Aorta (tissue), 5 donors: ENCODE measurements at regions of chr2 and their contacts with region 1.

Region 1: DNA sequence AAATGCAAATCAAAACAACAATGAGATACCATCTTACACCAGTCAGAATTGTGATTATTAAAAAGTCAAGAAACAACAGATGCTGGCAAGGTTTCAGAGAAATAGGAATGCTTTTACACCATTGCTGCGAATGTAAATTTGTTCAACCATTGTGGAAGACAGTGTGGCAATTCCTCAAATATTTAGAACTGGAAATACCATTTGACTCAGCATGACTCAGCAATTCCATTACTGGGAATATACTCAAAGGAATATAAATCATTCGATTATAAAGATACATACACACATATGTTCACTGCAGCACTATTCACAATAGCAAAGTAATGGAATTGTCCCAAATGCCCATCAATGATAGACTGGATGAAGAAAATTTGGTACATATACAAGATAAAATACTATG is 516.7 kb downstream of the ERBB4 start:
- DNase-seq: no peak
- ATAC-seq: no peak
- H3K4me3 ChIP-seq: no peak overlapping the region
- H3K27ac ChIP-seq: no peak overlapping the region
- H3K4me1 ChIP-seq: peaks cover 0 to 2% of the 10 kb centered on the region in 2 donors
- H3K27me3 ChIP-seq: no peaks in the 10 kb centered on the region

Region 2: DNA sequence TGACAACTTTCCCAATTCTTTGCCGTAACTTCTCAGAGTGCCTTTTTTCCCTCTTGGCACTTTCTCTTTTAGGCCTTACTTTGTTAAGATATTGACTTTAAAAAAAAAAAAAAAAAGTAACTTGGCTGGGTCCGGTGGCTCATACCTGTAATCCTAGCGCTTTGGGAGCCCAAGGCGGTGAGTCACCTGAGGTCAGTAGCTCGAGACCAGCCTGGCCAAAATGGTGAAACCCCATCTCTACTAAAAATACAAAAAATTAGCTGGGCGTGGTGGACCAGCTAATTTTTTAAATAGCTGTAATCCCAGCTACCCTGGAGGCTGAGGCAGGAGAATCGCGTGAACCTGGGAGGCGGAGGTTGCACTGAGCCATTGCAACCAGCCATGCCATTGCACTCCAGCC is 44.5 kb before region 1 on chr2:
- intact Hi-C with region 1: loop called in 1 of 2 experiments (anchors 10 kb)
- DNase-seq: peak in 1 of 2 donors; percentile 27
- ATAC-seq: no peak
- H3K4me3 ChIP-seq: no peak overlapping the region
- H3K27ac ChIP-seq: no peak overlapping the region
- H3K4me1 ChIP-seq: peaks cover 0 to 2% of the 10 kb centered on the region in 2 donors
- H3K27me3 ChIP-seq: no peaks in the 10 kb centered on the region

Region 3: GRCh38 chr2:212088353-212088752 is 66.4 kb after region 1 on chr2:
- intact Hi-C with region 1: no loop called
- DNase-seq: no peak
- ATAC-seq: no peak
- H3K4me3 ChIP-seq: no peak overlapping the region
- H3K27ac ChIP-seq: no peak overlapping the region
- H3K4me1 ChIP-seq: no peaks in the 10 kb centered on the region
- H3K27me3 ChIP-seq: no peaks in the 10 kb centered on the region

Region 4: DNA sequence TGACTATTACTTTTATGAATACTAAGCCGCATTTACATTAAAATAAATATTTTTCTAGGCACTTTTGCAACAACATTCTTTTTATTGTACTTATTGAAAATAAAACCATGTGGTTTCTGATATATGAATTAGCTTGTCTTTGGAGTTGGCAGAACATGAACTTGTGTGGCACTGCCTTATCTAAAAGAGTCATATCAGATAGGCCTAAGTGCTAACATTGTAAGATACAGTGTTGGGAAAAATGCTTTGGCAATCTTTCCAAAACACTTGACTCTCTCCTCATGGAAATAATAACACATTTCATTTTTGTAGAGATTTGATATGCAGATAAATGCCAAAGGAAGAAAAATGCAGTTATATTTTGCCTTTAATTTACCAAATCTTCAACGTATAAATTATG is 324.9 kb after region 1 on chr2:
- intact Hi-C with region 1: loop called in 1 of 2 experiments (anchors 10 kb)
- DNase-seq: no peak
- ATAC-seq: no peak
- H3K4me3 ChIP-seq: no peak overlapping the region
- H3K27ac ChIP-seq: no peak overlapping the region
- H3K4me1 ChIP-seq: peaks cover 1 to 5% of the 10 kb centered on the region in 2 donors
- H3K27me3 ChIP-seq: no peaks in the 10 kb centered on the region